Heart right ventricle (tissue), 16 donors: ENCODE measurements at regions of chr3 and their contacts with region 1.

Region 1: GRCh38 chr3:16600780-16601539 is 4.3 kb downstream of the DAZL start:
- DNase-seq: peak; percentile 74 to 82
- ATAC-seq: peak in 6 of 8 donors; percentile 49 to 83 (median 66)
- H3K4me3 ChIP-seq: peak overlapping the region in 1 of 10 donors; percentile 8
- H3K27ac ChIP-seq: no peak overlapping the region
- H3K4me1 ChIP-seq: peaks cover 0 to 6% (median 4%) of the 10 kb centered on the region in 9 donors
- H3K27me3 ChIP-seq: no peaks in the 10 kb centered on the region
- CTCF ChIP-seq: peak; percentile 62 to 94 (median 89)

Region 2: DNA sequence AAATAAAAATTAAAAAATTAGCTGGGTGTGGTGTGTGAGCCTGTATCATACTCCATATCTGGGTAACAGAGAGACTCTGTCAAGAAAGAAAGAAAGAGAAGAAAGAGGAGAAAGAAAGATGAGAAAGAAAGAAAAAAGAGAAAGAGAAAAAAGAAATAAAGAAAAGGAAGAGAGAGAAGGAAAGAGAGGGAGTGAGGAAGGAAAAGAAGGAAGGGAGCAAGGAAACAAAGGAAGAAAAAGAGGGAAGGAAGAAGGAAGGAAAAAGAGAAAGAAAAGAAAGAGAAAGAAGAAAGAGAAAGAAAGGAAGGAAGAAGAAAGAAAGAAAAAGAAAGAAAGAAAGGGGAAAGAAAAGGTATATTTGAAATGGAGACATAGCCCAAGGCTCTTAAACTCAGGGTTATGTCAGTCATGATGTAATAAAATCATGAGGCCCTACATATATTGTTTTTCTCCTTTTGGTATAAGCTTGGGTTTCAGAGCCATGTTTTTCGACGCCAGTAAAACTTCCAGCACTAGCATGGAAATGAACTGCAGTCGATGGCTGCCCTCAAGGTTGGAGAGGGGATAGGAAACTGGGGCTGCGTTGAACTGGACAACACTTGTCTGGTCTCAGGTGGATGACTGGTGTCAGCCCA is 49.5 kb before region 1 on chr3:
- intact Hi-C with region 1: no loop called
- DNase-seq: no peak
- ATAC-seq: peak in 1 of 8 donors; percentile 12
- H3K4me3 ChIP-seq: no peak overlapping the region
- H3K27ac ChIP-seq: no peak overlapping the region
- H3K4me1 ChIP-seq: peaks cover 0 to 31% (median 14%) of the 10 kb centered on the region in 9 donors
- H3K27me3 ChIP-seq: no peaks in the 10 kb centered on the region
- CTCF ChIP-seq: no peak

Region 3: GRCh38 chr3:16647668-16648067 is 46.7 kb after region 1 on chr3:
- intact Hi-C with region 1: no loop called
- DNase-seq: no peak
- ATAC-seq: no peak
- H3K4me3 ChIP-seq: no peak overlapping the region
- H3K27ac ChIP-seq: no peak overlapping the region
- H3K4me1 ChIP-seq: no peaks in the 10 kb centered on the region
- H3K27me3 ChIP-seq: no peaks in the 10 kb centered on the region
- CTCF ChIP-seq: no peak

Region 4: DNA sequence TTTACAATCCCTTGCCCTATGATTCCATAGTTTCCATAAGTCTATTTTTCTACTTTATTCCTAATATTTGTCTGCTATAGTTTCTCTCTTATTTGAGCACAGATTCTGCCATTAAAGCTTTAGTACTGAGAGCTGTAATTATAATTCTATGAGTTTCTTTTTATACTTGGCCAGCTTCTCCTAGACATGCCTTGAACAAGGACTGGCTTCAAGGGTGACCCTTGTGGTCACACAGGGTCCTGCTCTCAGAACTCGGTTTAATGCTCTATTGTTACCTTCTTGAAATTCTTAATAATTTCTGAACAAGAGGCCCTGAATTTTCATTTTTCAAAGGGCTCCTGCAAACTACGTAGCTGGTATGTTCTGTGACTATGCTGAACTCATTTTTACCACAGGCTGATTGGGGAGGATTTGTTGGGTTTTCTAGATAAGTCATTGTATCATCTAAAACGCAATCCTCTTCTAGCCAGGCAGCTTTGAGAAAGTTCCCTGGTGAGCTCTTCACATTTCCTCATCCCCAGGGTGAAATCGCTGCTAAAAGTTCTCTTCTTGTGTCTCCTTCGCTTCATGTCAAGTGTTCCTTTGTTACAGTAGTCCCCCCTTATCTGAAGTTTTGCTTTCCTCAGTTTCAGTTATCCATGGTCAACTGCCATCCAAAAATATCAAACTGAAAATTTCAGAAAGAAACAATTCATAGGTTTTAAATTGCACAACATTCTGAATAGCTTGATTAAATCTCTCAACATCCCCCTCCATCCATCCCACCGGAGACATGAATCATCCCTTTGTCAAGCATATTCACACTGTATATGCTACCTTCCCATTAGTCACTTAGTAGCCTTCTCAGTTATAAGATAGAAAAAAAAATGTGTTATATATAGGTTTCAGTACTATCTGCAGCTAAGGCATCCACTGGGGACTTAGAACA is 271.2 kb after region 1 on chr3:
- intact Hi-C with region 1: loop called in 1 of 10 experiments (anchors 10 kb)
- DNase-seq: no peak
- ATAC-seq: no peak
- H3K4me3 ChIP-seq: no peak overlapping the region
- H3K27ac ChIP-seq: no peak overlapping the region
- H3K4me1 ChIP-seq: peaks cover 0 to 46% (median 0%) of the 10 kb centered on the region in 9 donors
- H3K27me3 ChIP-seq: no peaks in the 10 kb centered on the region
- CTCF ChIP-seq: no peak

Region 5: DNA sequence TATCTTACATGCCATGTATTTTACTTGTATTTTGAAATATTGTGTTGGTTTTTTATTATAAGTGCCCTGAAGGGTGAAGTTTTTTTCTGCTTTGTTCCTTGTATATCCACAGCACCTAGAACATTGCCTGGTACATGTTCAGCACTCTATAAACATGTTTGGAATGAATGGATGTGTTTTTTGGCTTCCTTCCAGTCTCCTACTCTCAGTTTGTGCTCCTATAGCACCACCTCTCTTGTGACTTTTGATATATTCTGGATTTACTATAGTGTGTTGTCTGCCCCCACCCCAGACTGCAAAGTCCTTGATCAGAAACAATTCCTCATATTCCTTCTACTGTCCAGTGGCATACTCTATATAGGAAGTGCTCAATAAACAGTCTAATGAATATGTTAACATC is 344.4 kb after region 1 on chr3:
- intact Hi-C with region 1: loop called in 1 of 10 experiments (anchors 5 kb)
- DNase-seq: no peak
- ATAC-seq: peak in 4 of 8 donors; percentile 24 to 53 (median 30)
- H3K4me3 ChIP-seq: no peak overlapping the region
- H3K27ac ChIP-seq: no peak overlapping the region
- H3K4me1 ChIP-seq: peaks cover 9 to 71% (median 40%) of the 10 kb centered on the region in 9 donors
- H3K27me3 ChIP-seq: no peaks in the 10 kb centered on the region
- CTCF ChIP-seq: peak in 2 of 9 donors; percentile 20 to 23

Region 6: DNA sequence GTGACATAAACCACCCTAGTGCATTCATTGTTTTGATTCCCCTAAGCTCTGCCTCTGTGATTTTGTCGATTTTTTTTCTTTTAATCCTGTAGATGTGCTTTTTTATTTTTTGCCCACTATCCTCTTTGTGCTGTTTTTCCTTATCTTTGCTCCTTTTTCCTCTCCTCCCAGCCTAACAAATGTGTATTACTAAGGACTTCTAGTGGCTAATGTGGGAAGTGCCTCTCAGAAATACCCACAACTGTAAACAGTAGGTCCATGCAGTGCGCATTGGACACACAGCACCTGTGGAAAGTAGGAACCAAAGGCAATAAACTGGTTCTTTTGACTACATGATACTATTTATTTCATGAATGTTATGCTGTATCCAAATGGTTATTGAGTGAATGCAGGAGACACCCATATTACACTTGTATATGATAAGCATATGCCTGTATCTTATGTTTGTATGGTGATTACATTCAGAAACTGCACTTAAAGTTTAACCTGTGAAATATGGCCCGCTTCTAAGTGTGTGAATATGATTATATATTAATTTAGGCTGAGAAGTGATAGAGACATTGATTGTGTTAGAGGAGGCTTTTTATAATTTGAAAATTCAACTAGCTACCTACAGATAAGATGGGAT is 431.6 kb after region 1 on chr3:
- intact Hi-C with region 1: loop called in 9 of 10 experiments (anchors 2 to 10 kb)
- DNase-seq: no peak
- ATAC-seq: peak in 7 of 8 donors; percentile 37 to 84 (median 66)
- H3K4me3 ChIP-seq: no peak overlapping the region
- H3K27ac ChIP-seq: no peak overlapping the region
- H3K4me1 ChIP-seq: peaks cover 0 to 37% (median 3%) of the 10 kb centered on the region in 9 donors
- H3K27me3 ChIP-seq: no peaks in the 10 kb centered on the region
- CTCF ChIP-seq: peak; percentile 45 to 77 (median 64)

Region 7: GRCh38 chr3:17233398-17233800 is 632.4 kb after region 1 on chr3:
- intact Hi-C with region 1: loop called (anchors 1 to 5 kb)
- DNase-seq: peak in 1 of 2 donors; percentile 11
- ATAC-seq: peak; percentile 48 to 91 (median 82)
- H3K4me3 ChIP-seq: no peak overlapping the region
- H3K27ac ChIP-seq: no peak overlapping the region
- H3K4me1 ChIP-seq: peaks cover 0 to 35% (median 24%) of the 10 kb centered on the region in 9 donors
- H3K27me3 ChIP-seq: no peaks in the 10 kb centered on the region
- CTCF ChIP-seq: peak; percentile 40 to 84 (median 75)

Region 8: GRCh38 chr3:17841190-17841828 is 1240.3 kb after region 1 on chr3:
- intact Hi-C with region 1: loop called in 1 of 10 experiments (anchors 2 kb)
- DNase-seq: peak; percentile 70 to 76
- ATAC-seq: peak; percentile 74 to 91 (median 83)
- H3K4me3 ChIP-seq: no peak overlapping the region
- H3K27ac ChIP-seq: no peak overlapping the region
- H3K4me1 ChIP-seq: no peaks in the 10 kb centered on the region
- H3K27me3 ChIP-seq: peaks cover 0 to 18% (median 0%) of the 10 kb centered on the region in 7 donors
- CTCF ChIP-seq: peak; percentile 85 to 97 (median 95)